ENCODE measurements at regions of chr2 and their contacts with region 1.

Region 1: DNA sequence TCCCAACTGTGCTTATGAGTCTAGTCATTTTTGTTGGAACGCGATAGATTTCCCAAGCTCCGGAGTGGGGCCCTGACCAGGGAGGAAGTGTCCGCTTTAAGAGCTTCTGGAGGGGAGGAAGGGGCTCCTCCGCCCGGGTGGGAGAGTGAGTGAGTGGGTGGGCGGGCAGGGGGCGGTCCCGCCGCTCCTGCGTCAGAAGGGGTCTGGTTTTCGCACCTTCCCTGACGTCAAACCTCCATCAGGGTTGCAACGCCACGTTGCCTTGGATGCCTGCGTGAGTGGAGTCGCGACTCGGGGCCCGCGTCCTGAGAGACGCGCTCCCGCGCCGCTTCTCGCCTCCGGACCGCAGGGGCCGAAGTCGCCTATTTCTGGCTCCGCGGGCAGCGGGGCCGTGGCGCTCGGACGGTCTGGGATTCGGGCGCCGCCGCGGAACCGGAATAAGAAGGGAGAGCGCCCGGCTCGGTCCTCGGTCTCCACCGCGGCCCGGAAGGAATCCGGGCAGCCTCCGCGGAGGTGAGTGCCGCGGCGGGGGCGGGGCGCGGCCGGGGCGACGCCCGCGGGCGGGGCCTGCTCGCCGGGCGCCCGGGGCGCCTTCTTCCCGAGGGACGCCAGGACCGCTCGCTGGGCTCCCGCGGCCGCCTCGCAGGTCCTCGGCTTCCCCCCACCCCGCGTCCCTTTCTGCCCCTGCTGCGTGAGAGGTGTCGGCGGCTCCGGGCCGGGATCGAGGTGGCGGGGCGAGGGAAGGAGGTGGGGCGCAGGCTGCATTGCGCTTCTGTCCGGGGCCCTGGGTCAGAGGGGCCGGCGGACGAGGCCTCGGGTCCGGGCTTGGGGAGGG is at the start of gene ZDBF2:
- DNase-seq: peak; percentile 58
- ATAC-seq: peak; percentile 86
- H3K4me3 Mint-ChIP-seq: peak within 1 kb of the TSS; percentile 84
- H3K27ac Mint-ChIP-seq: peak within 1 kb of the TSS; percentile 69
- H3K4me1 Mint-ChIP-seq: peaks cover 18% of the 10 kb centered on the region
- H3K27me3 Mint-ChIP-seq: peaks cover 43% of the 10 kb centered on the region
- CTCF ChIP-seq: no peak
- total RNA-seq, gene ZDBF2: 6.7 and 8.0 TPM in 2 replicates

Region 2: DNA sequence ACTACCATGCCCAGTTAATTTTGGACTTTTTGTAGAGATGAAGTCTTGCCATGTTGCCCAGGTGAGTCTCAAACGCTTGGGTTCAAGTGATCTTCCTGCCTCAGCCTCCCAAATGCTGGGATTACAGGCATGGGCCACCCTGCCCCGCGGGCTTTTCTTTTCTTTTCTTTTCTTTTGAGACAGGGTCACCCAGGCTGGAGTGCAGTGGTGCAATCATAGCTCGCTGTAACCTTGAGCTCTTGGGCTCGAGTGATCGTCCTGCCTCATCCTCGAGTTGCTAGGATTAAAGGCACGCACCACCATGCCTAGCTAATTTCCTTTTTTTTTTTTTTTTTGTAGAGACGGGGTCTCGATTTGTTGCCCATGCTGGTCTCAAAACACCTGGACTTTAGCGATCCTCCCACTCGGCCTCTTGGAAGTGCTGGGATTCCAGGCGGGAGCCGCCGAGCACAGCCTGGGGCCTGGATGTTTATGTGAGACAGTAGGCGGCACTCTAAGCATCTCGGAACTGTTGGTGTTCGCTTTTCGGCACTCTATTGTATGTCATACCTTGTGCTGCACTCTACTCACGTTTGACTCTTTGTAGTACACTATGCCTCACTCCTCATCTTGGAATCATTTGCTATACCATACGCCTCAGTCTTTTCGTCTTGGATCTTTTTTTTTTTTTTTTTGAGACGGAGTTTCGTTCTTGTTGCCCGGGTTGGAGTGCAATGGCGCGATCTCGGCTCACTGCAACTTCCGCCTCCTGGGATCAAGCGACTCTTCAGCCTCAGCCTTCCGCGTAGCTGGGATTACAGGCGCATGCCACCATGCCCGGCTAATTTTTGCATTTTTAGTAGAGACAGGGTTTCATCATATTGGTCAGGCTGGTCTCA is 24.7 kb before region 1 on chr2:
- CTCF ChIA-PET with region 1: no interaction called
- POLR2A ChIA-PET with region 1: interaction called, 4 read pairs
- intact Hi-C with region 1: loop called (anchors 1 kb)
- DNase-seq: no peak
- ATAC-seq: no peak
- H3K4me3 Mint-ChIP-seq: peak overlapping the region; percentile 77
- H3K27ac Mint-ChIP-seq: no peak overlapping the region
- H3K4me1 Mint-ChIP-seq: peaks cover 29% of the 10 kb centered on the region
- H3K27me3 Mint-ChIP-seq: peaks cover 29% of the 10 kb centered on the region
- CTCF ChIP-seq: no peak

Region 3: DNA sequence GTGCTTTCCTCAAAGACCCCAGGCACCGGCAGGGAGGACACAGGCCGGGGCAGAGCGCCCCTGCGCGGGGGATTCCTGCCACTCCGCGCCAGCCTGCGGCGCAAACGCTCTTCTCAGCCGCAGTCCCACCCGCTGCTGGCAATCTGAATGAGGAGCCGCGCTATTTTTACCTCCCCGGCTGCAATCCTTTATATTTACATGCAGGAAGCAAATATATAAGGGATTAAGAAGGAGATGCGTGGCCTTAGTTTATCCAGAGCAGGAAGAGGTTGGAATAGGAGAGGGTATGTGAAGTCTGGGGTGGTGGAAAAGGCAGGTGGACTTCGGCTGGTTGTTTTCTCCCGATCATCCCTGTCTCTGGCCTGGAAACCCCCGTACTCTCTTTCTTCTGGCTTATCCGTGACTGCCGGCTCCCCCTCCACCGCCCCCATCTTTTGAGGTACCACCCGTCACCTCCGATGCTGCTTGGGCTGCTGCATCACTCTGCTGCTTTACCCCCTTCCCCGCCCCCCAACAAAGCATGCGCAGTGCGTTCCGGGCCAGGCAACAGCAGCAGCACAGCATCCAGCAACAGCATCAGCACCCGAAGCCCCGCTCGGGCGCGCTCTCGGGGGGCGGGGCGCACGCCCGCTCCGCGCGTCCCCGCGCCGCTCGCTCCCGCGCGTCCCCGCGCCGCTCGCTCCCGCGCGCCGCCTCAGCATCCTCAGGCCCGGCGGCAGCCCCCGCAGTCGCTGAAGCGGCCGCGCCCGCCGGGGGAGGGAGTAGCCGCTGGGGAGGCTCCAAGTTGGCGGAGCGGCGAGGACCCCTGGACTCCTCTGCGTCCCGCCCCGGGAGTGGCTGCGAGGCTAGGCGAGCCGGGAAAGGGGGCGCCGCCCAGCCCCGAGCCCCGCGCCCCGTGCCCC is 168.4 kb after region 1 on chr2 and contains the start of gene ADAM23:
- CTCF ChIA-PET with region 1: no interaction called
- POLR2A ChIA-PET with region 1: no interaction called
- intact Hi-C with region 1: loop called (anchors 5 kb)
- DNase-seq: peak; percentile 37
- ATAC-seq: peak; percentile 66
- H3K4me3 Mint-ChIP-seq: peak within 1 kb of the TSS; percentile 80
- H3K27ac Mint-ChIP-seq: no peak within 1 kb of the TSS
- H3K4me1 Mint-ChIP-seq: peaks cover 16% of the 10 kb centered on the region
- H3K27me3 Mint-ChIP-seq: peaks cover 50% of the 10 kb centered on the region
- CTCF ChIP-seq: no peak
- total RNA-seq, gene ADAM23: 0.86 and 1.5 TPM in 2 replicates

Region 4: DNA sequence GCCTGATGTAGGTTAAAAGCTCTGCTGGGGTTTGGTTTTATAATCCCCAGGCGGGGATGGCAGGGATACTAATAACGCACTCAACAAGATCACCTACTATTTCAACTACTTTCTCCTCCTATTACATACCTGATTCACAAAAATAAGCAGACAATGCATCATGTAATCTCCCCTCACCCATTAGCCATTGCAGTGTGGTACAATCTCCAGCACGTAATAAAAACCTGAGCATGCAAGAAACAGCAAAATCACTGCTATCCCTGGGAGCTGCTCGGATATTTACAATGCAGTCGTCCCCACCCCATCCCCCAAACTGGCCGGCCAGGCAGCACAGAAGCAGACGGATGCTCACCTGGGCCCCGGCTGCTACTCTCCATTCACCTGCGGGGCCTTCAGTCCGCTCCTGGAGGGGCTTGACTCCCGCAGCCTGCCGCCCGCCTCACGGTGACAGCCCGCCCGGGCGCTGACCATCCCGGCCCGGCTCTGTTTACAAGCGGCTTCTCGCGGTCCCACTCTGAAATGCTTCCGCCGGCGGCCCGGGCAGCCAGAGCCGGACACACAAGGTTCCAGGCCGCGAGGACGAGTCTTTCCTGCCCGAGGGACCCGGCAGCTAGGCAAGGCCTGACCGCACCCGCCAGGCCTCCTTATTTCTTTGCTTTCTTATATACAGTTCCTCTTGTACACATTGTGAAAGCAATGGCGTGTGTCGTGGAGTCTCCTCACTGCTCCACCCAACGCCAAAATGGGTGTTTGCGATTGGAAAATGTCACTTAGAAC is 1750.6 kb after region 1 on chr2 and contains the start of gene PLEKHM3:
- CTCF ChIA-PET with region 1: no interaction called
- POLR2A ChIA-PET with region 1: no interaction called
- intact Hi-C with region 1: loop called (anchors 10 kb)
- DNase-seq: peak; percentile 76
- ATAC-seq: peak; percentile 91
- H3K4me3 Mint-ChIP-seq: peak within 1 kb of the TSS; percentile 86
- H3K27ac Mint-ChIP-seq: peak within 1 kb of the TSS; percentile 92
- H3K4me1 Mint-ChIP-seq: peaks cover 20% of the 10 kb centered on the region
- H3K27me3 Mint-ChIP-seq: no peaks in the 10 kb centered on the region
- CTCF ChIP-seq: no peak
- total RNA-seq, gene PLEKHM3: 12.0 and 12.2 TPM in 2 replicates

Measured in activated B cell treated with CpG ODN at 0.5 μM for 24 hours (primary cell).